ENCODE measurements at regions of chr1 and their contacts with region 1.

Region 1: GRCh38 chr1:204398217-204399081 is 13.2 kb downstream of the PPP1R15B start:
- DNase-seq: peak; percentile 80 to 94 (median 90)
- ATAC-seq: peak; percentile 79
- H3K4me3 ChIP-seq: no peak overlapping the region
- H3K27ac ChIP-seq: no peak overlapping the region
- H3K4me1 ChIP-seq: peaks cover 0 to 11% of the 10 kb centered on the region in 2 experiments; a peak in 3 of 5 replicates
- H3K27me3 ChIP-seq: 0 out of 5 replicates have a peak, but pooled peaks cover 0 to 2% of the 10 kb centered on the region in 2 experiments
- CTCF ChIP-seq: peak; percentile 89 to 97 (median 94)
- EP300 ChIP-seq: no peak
- POLR2A ChIP-seq: no peak
- RAD21 ChIP-seq: peak; percentile 65 to 73

Region 2: GRCh38 chr1:203744075-203744972 is 654.1 kb before region 1 on chr1:
- CTCF ChIA-PET with region 1: no interaction called
- POLR2A ChIA-PET with region 1: no interaction called
- in situ Hi-C with region 1: no loop called
- intact Hi-C with region 1: no loop called
- DNase-seq: no peak
- ATAC-seq: no peak
- H3K4me3 ChIP-seq: no peak overlapping the region
- H3K27ac ChIP-seq: no peak overlapping the region
- H3K4me1 ChIP-seq: no peaks in the 10 kb centered on the region
- H3K27me3 ChIP-seq: no peaks in the 10 kb centered on the region
- CTCF ChIP-seq: no peak
- EP300 ChIP-seq: no peak
- POLR2A ChIP-seq: no peak
- RAD21 ChIP-seq: no peak

Region 3: GRCh38 chr1:204025917-204026707 is 372.3 kb before region 1 on chr1:
- CTCF ChIA-PET with region 1: no interaction called
- POLR2A ChIA-PET with region 1: no interaction called
- in situ Hi-C with region 1: no loop called
- intact Hi-C with region 1: no loop called
- DNase-seq: no peak
- ATAC-seq: no peak; the same call in 2 of the 3 replicates
- H3K4me3 ChIP-seq: no peak overlapping the region
- H3K27ac ChIP-seq: no peak overlapping the region
- H3K4me1 ChIP-seq: no peaks in the 10 kb centered on the region
- H3K27me3 ChIP-seq: peaks cover 23 to 33% of the 10 kb centered on the region in 2 experiments
- CTCF ChIP-seq: no peak
- EP300 ChIP-seq: no peak
- POLR2A ChIP-seq: no peak
- RAD21 ChIP-seq: no peak

Region 4: GRCh38 chr1:204162231-204163074 is 236.0 kb before region 1 on chr1:
- CTCF ChIA-PET with region 1: interaction called, 11 read pairs
- POLR2A ChIA-PET with region 1: no interaction called
- in situ Hi-C with region 1: no loop called
- intact Hi-C with region 1: no loop called
- DNase-seq: peak; percentile 76 to 94 (median 90)
- ATAC-seq: peak; percentile 98
- H3K4me3 ChIP-seq: no peak overlapping the region
- H3K27ac ChIP-seq: no peak overlapping the region
- H3K4me1 ChIP-seq: no peaks in the 10 kb centered on the region
- H3K27me3 ChIP-seq: peaks cover 3 to 43% of the 10 kb centered on the region in 2 experiments; a peak in 4 of 5 replicates
- CTCF ChIP-seq: peak; percentile 96 to 99 (median 98)
- EP300 ChIP-seq: no peak
- POLR2A ChIP-seq: no peak
- RAD21 ChIP-seq: peak; percentile 99 to 100

Region 5: GRCh38 chr1:204384994-204385352 is 13.5 kb before region 1 on chr1:
- CTCF ChIA-PET with region 1: no interaction called
- POLR2A ChIA-PET with region 1: interaction called, 13 read pairs
- in situ Hi-C with region 1: no loop called
- intact Hi-C with region 1: loop called (anchors 2 kb)
- DNase-seq: no peak
- ATAC-seq: peak; percentile 19; the same call in 1 of the 3 replicates
- H3K4me3 ChIP-seq: no peak overlapping the region
- H3K27ac ChIP-seq: no peak overlapping the region
- H3K4me1 ChIP-seq: no peaks in the 10 kb centered on the region; a peak in 1 of 5 replicates
- H3K27me3 ChIP-seq: peaks cover 20 to 22% of the 10 kb centered on the region in 2 experiments
- CTCF ChIP-seq: no peak
- EP300 ChIP-seq: no peak
- POLR2A ChIP-seq: no peak
- RAD21 ChIP-seq: no peak

Measured in K562 (cell line).